Heart right ventricle (tissue), 16 donors: ENCODE measurements at regions of chr3 and their contacts with region 1.

Region 1: GRCh38 chr3:104696470-104696869 is 670.2 kb upstream of the ALCAM start:
- DNase-seq: no peak
- ATAC-seq: no peak
- H3K4me3 ChIP-seq: no peak overlapping the region
- H3K27ac ChIP-seq: no peak overlapping the region
- H3K4me1 ChIP-seq: no peaks in the 10 kb centered on the region
- H3K27me3 ChIP-seq: peaks cover 0 to 5% (median 0%) of the 10 kb centered on the region in 7 donors
- CTCF ChIP-seq: no peak

Region 2: GRCh38 chr3:104411757-104412156 is 284.7 kb before region 1 on chr3:
- intact Hi-C with region 1: no loop called
- DNase-seq: no peak
- ATAC-seq: no peak
- H3K4me3 ChIP-seq: no peak overlapping the region
- H3K27ac ChIP-seq: no peak overlapping the region
- H3K4me1 ChIP-seq: no peaks in the 10 kb centered on the region
- H3K27me3 ChIP-seq: no peaks in the 10 kb centered on the region
- CTCF ChIP-seq: no peak

Region 3: GRCh38 chr3:104785947-104786346 is 89.5 kb after region 1 on chr3:
- intact Hi-C with region 1: no loop called
- DNase-seq: no peak
- ATAC-seq: no peak
- H3K4me3 ChIP-seq: no peak overlapping the region
- H3K27ac ChIP-seq: no peak overlapping the region
- H3K4me1 ChIP-seq: no peaks in the 10 kb centered on the region
- H3K27me3 ChIP-seq: no peaks in the 10 kb centered on the region
- CTCF ChIP-seq: no peak

Region 4: GRCh38 chr3:105260385-105260784 is 563.9 kb after region 1 on chr3:
- intact Hi-C with region 1: loop called in 1 of 10 experiments (anchors 5 kb)
- DNase-seq: no peak
- ATAC-seq: no peak
- H3K4me3 ChIP-seq: no peak overlapping the region
- H3K27ac ChIP-seq: no peak overlapping the region
- H3K4me1 ChIP-seq: no peaks in the 10 kb centered on the region
- H3K27me3 ChIP-seq: no peaks in the 10 kb centered on the region
- CTCF ChIP-seq: no peak